ENCODE measurements at regions of chr11 and their contacts with region 1.

Region 1: DNA sequence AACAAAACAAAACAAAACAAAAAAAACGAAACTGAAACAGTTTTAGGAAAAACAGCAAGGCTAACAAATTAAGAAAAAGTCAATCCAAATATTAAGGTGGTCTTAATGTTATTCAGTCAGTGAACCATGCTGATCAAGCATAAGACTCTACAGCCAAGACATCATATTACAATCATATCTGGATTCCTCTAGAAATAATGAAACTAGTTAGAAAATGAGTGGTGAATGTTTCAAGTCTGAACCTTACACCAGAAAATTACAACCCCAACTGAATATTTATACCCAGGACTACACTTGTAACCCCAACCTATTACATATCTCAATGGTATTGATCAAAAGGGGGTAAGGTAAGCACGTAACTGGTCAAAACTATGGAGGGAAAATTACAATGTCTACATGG is 48.8 kb downstream of the ACAT1 start:
- DNase-seq: no peak
- ATAC-seq: no peak
- H3K4me3 ChIP-seq: peak overlapping the region in 9 of 12 donors; percentile 11 to 46 (median 31)
- H3K27ac ChIP-seq: peak overlapping the region in 7 of 12 donors; percentile 10 to 50 (median 23)
- H3K4me1 ChIP-seq: peaks cover 0 to 10% (median 0%) of the 10 kb centered on the region in 12 donors
- H3K27me3 ChIP-seq: no peaks in the 10 kb centered on the region
- CTCF ChIP-seq: no peak
- POLR2A ChIP-seq: no peak

Region 2: GRCh38 chr11:107988397-107989158 is 181.6 kb before region 1 on chr11:
- intact Hi-C with region 1: no loop called
- DNase-seq: no peak
- ATAC-seq: peak in 1 of 4 donors; percentile 69
- H3K4me3 ChIP-seq: no peak overlapping the region
- H3K27ac ChIP-seq: peak overlapping the region in 1 of 12 donors; percentile 51
- H3K4me1 ChIP-seq: peaks cover 0 to 9% (median 0%) of the 10 kb centered on the region in 12 donors
- H3K27me3 ChIP-seq: no peaks in the 10 kb centered on the region
- CTCF ChIP-seq: no peak
- POLR2A ChIP-seq: no peak

Region 3: GRCh38 chr11:108048269-108048668 is 121.9 kb before region 1 on chr11:
- intact Hi-C with region 1: no loop called
- DNase-seq: no peak
- ATAC-seq: no peak
- H3K4me3 ChIP-seq: no peak overlapping the region
- H3K27ac ChIP-seq: no peak overlapping the region
- H3K4me1 ChIP-seq: no peaks in the 10 kb centered on the region
- H3K27me3 ChIP-seq: no peaks in the 10 kb centered on the region
- CTCF ChIP-seq: no peak
- POLR2A ChIP-seq: no peak

Region 4: DNA sequence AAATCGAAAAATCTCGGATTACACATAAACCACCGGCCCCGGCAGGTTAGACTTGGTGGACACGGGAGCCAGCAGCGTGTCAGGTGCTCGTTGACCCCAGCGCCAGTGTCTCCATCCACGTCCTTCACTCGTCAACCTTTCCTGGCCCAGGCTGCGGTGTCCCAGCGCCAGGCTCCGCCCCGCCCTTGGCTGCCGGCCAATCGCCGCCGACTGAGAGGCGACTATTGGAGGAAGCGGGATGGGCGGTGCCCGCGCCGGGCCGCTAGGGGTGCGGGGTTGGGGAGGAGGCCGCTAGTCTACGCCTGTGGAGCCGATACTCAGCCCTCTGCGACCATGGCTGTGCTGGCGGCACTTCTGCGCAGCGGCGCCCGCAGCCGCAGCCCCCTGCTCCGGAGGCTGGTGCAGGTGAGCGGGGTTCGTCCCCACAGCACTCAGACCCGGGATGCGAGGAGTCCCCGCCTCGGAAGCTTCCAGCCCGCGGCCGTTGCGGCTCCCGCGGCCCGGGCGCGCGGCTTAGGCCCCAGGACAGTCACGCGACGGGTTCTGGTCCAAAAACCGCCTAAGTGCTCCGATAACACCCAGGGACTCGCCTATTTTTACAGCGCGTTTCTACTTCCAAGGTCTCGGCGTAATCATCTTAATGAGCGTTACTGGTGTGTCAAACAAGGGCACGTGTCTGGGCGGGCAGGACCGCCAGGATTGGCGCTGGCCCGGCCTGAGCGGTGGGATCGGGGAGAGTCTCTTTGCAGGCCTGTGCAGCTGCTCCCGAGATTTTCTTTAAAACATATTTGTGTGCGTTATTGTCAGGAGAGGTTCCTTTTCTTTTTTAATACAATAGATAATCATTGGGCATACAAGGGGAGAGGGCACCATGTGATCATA is 48.7 kb before region 1 on chr11 and contains the start of gene ACAT1:
- intact Hi-C with region 1: loop called in 1 of 10 experiments (anchors 5 kb)
- DNase-seq: peak; percentile 98 to 100 (median 99)
- ATAC-seq: peak; percentile 88 to 96 (median 94)
- H3K4me3 ChIP-seq: peak within 1 kb of the TSS; percentile 38 to 85 (median 74)
- H3K27ac ChIP-seq: peak within 1 kb of the TSS; percentile 90 to 97 (median 94)
- H3K4me1 ChIP-seq: peaks cover 0 to 55% (median 31%) of the 10 kb centered on the region in 12 donors
- H3K27me3 ChIP-seq: peaks cover 0 to 3% (median 0%) of the 10 kb centered on the region in 9 donors
- CTCF ChIP-seq: peak in 10 of 12 donors; percentile 27 to 49 (median 33)
- POLR2A ChIP-seq: peak; percentile 66 to 94
- total RNA-seq, gene ACAT1: 206 to 1,337 (median 394) TPM

Region 5: DNA sequence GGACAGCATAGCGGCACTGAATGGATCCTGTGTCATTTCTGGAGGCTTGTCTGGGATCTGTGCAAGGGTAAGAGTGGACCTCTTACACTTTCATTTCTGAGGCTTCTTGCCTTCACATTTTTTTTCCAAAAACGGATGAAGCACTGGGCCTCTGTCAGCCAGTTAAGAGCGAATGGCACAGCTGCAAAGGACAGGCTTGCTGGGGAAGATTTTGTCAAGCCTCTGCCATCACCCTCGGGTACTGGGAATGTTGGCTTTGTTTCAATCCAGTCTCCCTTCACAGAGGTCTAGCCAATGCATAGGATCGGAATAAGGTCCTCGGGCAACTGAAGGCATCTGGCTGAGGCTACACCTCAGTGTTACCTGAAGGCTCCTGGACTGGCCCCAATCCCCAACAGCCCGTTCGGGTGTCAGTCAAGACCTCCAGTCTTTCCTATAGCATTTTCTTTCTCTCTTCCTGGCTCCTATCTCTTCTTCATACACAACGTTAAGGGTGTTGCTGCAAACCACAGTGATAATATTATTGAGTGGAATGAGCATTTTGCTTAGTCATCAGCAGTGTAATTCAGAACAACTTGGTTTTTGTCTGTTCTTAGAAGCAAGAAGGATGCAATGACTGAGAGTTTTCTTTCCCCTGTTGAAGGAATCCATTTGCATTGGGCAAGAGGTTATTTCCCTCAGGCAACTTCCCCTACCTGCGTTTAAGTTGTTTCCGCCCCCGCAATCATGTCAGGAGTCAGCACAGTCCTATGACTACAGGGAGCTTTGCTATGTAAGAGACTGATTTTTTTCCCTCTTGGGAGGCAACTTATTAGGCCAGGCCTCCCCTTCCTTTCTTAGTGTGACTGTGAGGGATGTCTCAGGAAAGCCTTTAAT is 29.5 kb after region 1 on chr11:
- intact Hi-C with region 1: no loop called
- DNase-seq: no peak
- ATAC-seq: peak in 2 of 4 donors; percentile 16 to 54
- H3K4me3 ChIP-seq: no peak overlapping the region
- H3K27ac ChIP-seq: peak overlapping the region in 1 of 12 donors; percentile 3
- H3K4me1 ChIP-seq: peaks cover 0 to 30% (median 0%) of the 10 kb centered on the region in 12 donors
- H3K27me3 ChIP-seq: no peaks in the 10 kb centered on the region
- CTCF ChIP-seq: no peak
- POLR2A ChIP-seq: no peak